Caco-2 (cell line): ENCODE measurements at regions of chr20 and their contacts with region 1.

Region 1: GRCh38 chr20:44394702-44395460 is 39.4 kb downstream of the HNF4A start:
- DNase-seq: peak; percentile 97 to 98
- H3K4me3 ChIP-seq: peak overlapping the region; percentile 11
- H3K4me3 Mint-ChIP-seq: peak overlapping the region; percentile 47
- H3K27ac Mint-ChIP-seq: peak overlapping the region; percentile 78
- H3K4me1 ChIP-seq: peaks cover 79% of the 10 kb centered on the region
- H3K4me1 Mint-ChIP-seq: peaks cover 52% of the 10 kb centered on the region
- H3K27me3 ChIP-seq: no peaks in the 10 kb centered on the region
- H3K27me3 Mint-ChIP-seq: no peaks in the 10 kb centered on the region
- CTCF ChIP-seq: no peak

Region 2: DNA sequence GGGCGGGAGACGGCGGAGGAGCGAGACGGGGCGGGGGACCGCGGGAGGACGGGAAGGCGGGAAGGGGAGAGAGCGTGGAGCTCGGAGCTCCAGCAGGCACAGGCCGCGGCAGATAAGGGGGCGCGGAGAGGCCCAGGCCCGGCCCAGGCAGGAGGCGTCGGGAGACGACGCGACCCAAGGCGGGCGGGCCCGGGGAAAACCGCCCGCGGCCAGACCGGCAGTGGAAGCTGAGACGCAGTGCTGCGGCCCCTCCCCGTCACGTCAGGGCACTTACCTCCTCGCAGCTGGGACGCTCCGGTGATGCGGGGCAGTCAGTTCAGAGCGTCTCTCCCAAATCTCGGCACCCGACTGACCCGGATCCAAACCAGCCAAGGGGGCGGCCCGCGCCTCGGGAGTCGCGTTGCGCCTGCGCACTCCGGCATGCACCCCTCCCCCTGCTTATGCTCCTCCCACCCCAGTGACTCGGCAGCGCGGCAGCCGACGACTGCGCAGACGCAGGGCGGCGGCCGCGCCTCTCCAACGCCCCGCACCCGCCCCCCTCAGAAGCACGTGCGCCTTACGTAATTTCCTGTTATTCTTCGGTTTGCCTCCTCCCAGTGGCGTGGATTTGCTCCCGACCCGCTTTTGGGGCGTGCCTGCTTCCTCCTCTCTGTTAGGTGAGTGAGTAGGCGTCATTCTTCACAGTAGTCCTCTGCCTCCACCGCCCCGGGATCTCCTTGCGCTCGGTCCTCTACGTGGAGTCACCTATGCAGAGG is 184.3 kb before region 1 on chr20 and contains the start of gene OSER1:
- CTCF ChIA-PET with region 1: no interaction called
- POLR2A ChIA-PET with region 1: no interaction called
- intact Hi-C with region 1: loop called (anchors 2 kb)
- DNase-seq: peak; percentile 100
- H3K4me3 ChIP-seq: peak within 1 kb of the TSS; percentile 74
- H3K4me3 Mint-ChIP-seq: peak within 1 kb of the TSS; percentile 95
- H3K27ac Mint-ChIP-seq: peak within 1 kb of the TSS; percentile 96
- H3K4me1 ChIP-seq: peaks cover 19% of the 10 kb centered on the region
- H3K4me1 Mint-ChIP-seq: peaks cover 27% of the 10 kb centered on the region
- H3K27me3 ChIP-seq: no peaks in the 10 kb centered on the region
- H3K27me3 Mint-ChIP-seq: no peaks in the 10 kb centered on the region
- CTCF ChIP-seq: no peak
- total RNA-seq, gene OSER1: 79.7 and 82.3 TPM in 2 replicates

Region 3: DNA sequence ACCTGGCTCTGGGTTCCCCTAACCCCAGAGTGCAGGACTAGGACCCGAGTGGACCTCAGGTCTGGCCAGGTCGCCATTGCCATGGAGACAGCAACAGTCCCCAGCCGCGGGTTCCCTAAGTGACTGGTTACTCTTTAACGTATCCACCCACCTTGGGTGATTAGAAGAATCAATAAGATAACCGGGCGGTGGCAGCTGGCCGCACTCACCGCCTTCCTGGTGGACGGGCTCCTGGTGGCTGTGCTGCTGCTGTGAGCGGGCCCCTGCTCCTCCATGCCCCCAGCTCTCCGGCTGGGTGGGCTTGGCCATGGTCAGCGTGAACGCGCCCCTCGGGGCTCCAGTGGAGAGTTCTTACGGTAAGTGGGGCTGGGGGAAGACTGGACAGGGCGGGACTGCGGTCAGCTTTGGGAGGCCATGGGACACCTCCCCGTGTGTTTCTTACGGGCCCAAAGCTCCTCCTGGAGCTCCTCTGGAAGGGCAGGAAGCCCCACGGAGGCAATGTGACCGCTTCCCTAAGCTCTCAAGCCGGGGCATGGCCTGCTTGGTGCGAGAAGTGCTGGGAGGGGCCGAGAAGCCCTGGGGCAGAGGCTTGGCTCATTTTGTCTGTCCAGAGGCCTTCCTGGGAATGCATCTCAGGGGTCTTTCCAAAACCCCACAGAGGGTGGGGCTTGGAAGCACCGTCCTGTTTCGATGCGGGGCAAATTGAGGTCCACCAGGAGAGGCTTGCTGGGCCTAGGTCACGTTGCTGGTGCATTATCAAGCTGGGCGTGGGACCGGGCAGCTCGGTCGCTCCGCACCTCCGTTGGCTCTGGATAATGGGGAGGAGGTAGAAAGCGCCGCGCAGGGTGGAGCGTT is 39.2 kb before region 1 on chr20 and contains the start of gene HNF4A:
- CTCF ChIA-PET with region 1: interaction called, 5 read pairs
- POLR2A ChIA-PET with region 1: interaction called, 5 read pairs
- intact Hi-C with region 1: loop called (anchors 1 kb)
- DNase-seq: peak; percentile 96 to 97
- H3K4me3 ChIP-seq: peak within 1 kb of the TSS; percentile 77
- H3K4me3 Mint-ChIP-seq: peak within 1 kb of the TSS; percentile 93
- H3K27ac Mint-ChIP-seq: peak within 1 kb of the TSS; percentile 98
- H3K4me1 ChIP-seq: peaks cover 48% of the 10 kb centered on the region
- H3K4me1 Mint-ChIP-seq: peaks cover 41% of the 10 kb centered on the region
- H3K27me3 ChIP-seq: no peaks in the 10 kb centered on the region
- H3K27me3 Mint-ChIP-seq: no peaks in the 10 kb centered on the region
- CTCF ChIP-seq: no peak
- total RNA-seq, gene HNF4A: 256 and 292 TPM in 2 replicates

Region 4: DNA sequence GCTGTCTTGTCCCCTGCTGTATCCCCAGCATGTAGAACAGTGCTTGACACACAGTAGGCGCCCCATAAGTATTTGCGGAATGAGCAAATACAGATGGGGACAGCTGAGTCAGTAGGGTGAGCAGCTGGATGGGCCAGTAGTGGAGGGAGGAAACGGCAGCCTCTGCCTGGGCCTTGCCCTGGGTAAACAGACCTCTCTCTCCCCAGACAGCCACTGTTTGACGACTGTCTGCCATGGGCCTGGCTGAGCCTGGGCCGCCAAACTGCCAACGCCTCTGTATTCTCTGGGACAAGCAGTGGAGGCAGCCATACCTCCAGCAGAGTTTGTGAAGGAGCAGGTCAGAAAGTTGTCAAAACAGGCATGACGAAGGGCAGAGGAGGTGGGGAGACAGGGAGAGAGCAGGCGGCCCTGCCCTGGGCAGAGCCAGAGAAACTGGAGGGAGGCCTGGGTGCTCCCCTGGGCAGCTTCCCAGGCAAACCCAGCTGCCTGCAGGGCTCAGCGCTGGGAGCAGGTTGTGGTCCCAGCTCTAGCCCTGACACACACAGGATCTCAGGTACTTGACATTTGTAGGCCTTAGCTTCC is 24.2 kb before region 1 on chr20:
- CTCF ChIA-PET with region 1: interaction called, 3 read pairs
- POLR2A ChIA-PET with region 1: interaction called, 5 read pairs
- intact Hi-C with region 1: loop called (anchors 1 kb)
- DNase-seq: peak; percentile 98 to 99
- H3K4me3 ChIP-seq: no peak overlapping the region
- H3K4me3 Mint-ChIP-seq: peak overlapping the region; percentile 69
- H3K27ac Mint-ChIP-seq: peak overlapping the region; percentile 95
- H3K4me1 ChIP-seq: peaks cover 52% of the 10 kb centered on the region
- H3K4me1 Mint-ChIP-seq: peaks cover 47% of the 10 kb centered on the region
- H3K27me3 ChIP-seq: no peaks in the 10 kb centered on the region
- H3K27me3 Mint-ChIP-seq: no peaks in the 10 kb centered on the region
- CTCF ChIP-seq: peak in 1 of 2 experiments; percentile 13

Region 5: GRCh38 chr20:44409132-44409600 is 14.3 kb after region 1 on chr20:
- CTCF ChIA-PET with region 1: interaction called, 33 read pairs
- POLR2A ChIA-PET with region 1: interaction called, 21 read pairs
- intact Hi-C with region 1: loop called (anchors 1 kb)
- DNase-seq: no peak
- H3K4me3 ChIP-seq: no peak overlapping the region
- H3K4me3 Mint-ChIP-seq: no peak overlapping the region
- H3K27ac Mint-ChIP-seq: peak overlapping the region; percentile 86
- H3K4me1 ChIP-seq: peaks cover 97% of the 10 kb centered on the region
- H3K4me1 Mint-ChIP-seq: peaks cover 74% of the 10 kb centered on the region
- H3K27me3 ChIP-seq: no peaks in the 10 kb centered on the region
- H3K27me3 Mint-ChIP-seq: no peaks in the 10 kb centered on the region
- CTCF ChIP-seq: no peak

Region 6: GRCh38 chr20:44460795-44461141 is 65.9 kb after region 1 on chr20:
- CTCF ChIA-PET with region 1: no interaction called
- POLR2A ChIA-PET with region 1: no interaction called
- intact Hi-C with region 1: loop called (anchors 2 kb)
- DNase-seq: peak in 1 of 2 experiments; percentile 69
- H3K4me3 ChIP-seq: no peak overlapping the region
- H3K4me3 Mint-ChIP-seq: no peak overlapping the region
- H3K27ac Mint-ChIP-seq: no peak overlapping the region
- H3K4me1 ChIP-seq: peaks cover 9% of the 10 kb centered on the region
- H3K4me1 Mint-ChIP-seq: no peaks in the 10 kb centered on the region
- H3K27me3 ChIP-seq: no peaks in the 10 kb centered on the region
- H3K27me3 Mint-ChIP-seq: no peaks in the 10 kb centered on the region
- CTCF ChIP-seq: peak; percentile 73 to 82

Region 7: DNA sequence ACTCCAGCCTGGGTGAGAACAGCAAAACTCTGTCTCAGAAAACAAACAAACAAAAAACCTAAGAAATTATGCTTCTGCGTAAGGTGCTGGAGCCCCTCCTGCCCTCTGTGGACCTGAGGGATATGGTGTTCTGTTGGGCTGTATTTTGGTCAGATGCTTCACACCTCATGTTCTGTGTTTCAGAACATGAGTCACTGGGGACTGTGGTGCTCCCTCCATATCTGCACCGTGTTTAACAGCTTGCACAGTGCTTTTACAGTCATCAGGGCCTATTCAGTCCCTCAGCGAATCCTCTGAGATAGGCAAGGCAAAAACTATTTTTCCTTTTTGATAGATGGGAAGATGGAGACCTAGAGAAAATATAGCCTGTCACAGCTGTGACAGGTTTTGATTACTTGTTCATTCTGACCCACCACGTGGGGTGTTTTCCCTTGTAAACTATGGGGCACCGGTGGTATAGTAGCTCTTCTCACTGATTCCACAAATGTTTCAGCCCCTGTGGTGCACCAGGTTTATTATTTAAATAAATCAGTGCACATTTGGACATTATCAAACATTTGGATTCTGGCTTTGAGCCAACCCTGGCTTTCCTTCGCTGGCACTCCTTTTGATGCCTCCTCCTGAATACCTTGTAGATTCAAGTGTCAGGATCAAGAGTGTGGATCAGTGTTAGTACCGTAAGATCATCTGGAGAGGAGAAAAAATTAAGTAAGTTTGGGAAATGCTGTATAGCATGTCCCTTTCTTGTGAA is 90.4 kb after region 1 on chr20:
- CTCF ChIA-PET with region 1: no interaction called
- POLR2A ChIA-PET with region 1: no interaction called
- intact Hi-C with region 1: no loop called
- DNase-seq: no peak
- H3K4me3 ChIP-seq: no peak overlapping the region
- H3K4me3 Mint-ChIP-seq: no peak overlapping the region
- H3K27ac Mint-ChIP-seq: no peak overlapping the region
- H3K4me1 ChIP-seq: no peaks in the 10 kb centered on the region
- H3K4me1 Mint-ChIP-seq: no peaks in the 10 kb centered on the region
- H3K27me3 ChIP-seq: no peaks in the 10 kb centered on the region
- H3K27me3 Mint-ChIP-seq: no peaks in the 10 kb centered on the region
- CTCF ChIP-seq: no peak

Region 8: GRCh38 chr20:44521484-44522481 is 126.9 kb after region 1 on chr20 and contains the start of gene SERINC3:
- CTCF ChIA-PET with region 1: interaction called, 3 read pairs
- POLR2A ChIA-PET with region 1: interaction called, 3 read pairs
- intact Hi-C with region 1: loop called (anchors 5 kb)
- DNase-seq: peak; percentile 98 to 100
- H3K4me3 ChIP-seq: peak within 1 kb of the TSS; percentile 77
- H3K4me3 Mint-ChIP-seq: peak within 1 kb of the TSS; percentile 68
- H3K27ac Mint-ChIP-seq: peak within 1 kb of the TSS; percentile 72
- H3K4me1 ChIP-seq: peaks cover 68% of the 10 kb centered on the region
- H3K4me1 Mint-ChIP-seq: peaks cover 68% of the 10 kb centered on the region
- H3K27me3 ChIP-seq: no peaks in the 10 kb centered on the region
- H3K27me3 Mint-ChIP-seq: no peaks in the 10 kb centered on the region
- CTCF ChIP-seq: peak in 1 of 2 experiments; percentile 22
- total RNA-seq, gene SERINC3: 179 and 185 TPM in 2 replicates